ENCODE measurements at regions of chr2 and their contacts with region 1.

Region 1: DNA sequence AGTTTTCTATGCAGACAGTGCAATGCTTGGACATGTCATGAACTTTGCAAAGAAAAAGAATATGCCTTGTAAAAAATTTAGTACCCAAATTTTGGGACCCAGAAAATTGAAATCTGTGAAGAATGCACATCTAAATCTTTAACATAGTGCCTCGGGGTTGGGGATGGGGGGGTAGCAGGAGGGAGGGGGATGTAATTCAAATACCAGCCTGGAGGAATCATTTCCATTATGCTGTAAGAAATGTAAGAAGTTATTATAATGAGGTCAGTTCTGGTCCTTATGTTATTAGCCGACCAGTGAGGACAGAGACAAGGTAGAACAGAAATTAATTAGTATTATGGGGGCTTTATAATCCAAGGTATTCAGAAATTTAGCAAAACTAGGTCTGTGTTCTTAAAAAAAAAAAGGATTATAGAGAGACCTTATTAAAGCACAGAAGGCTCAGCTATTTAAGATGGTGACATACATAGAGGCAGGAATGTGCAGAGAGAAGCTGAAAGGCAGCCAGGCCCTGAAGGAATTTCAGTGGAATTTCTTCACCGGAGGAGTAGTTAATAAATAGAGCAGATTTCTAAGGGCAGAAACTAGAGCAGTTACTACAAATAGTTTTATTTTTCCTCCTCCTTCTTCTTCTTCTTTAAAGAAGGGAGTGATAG is 89.0 kb upstream of the RBMS1 start:
- DNase-seq: peak; percentile 75
- ATAC-seq: peak; percentile 81
- H3K4me3 ChIP-seq: no peak overlapping the region
- H3K27ac ChIP-seq: peak overlapping the region; percentile 70; the same call in 1 of the 2 replicates
- H3K4me1 ChIP-seq: peaks cover 18% of the 10 kb centered on the region
- H3K27me3 ChIP-seq: no peaks in the 10 kb centered on the region
- CTCF ChIP-seq: 0 out of 2 replicates have a peak, but pooled peaks have one; percentile 2
- POLR2A ChIP-seq: no peak
- RAD21 ChIP-seq: no peak

Region 2: GRCh38 chr2:160353813-160354212 is 228.8 kb before region 1 on chr2:
- CTCF ChIA-PET with region 1: no interaction called
- POLR2A ChIA-PET with region 1: interaction called, 11 read pairs
- dilution Hi-C with region 1: no loop called
- in situ Hi-C with region 1: no loop called
- intact Hi-C with region 1: no loop called
- DNase-seq: no peak
- ATAC-seq: no peak
- H3K4me3 ChIP-seq: no peak overlapping the region
- H3K27ac ChIP-seq: no peak overlapping the region
- H3K4me1 ChIP-seq: peaks cover 25% of the 10 kb centered on the region
- H3K27me3 ChIP-seq: no peaks in the 10 kb centered on the region
- CTCF ChIP-seq: no peak
- POLR2A ChIP-seq: no peak
- RAD21 ChIP-seq: no peak

Region 3: GRCh38 chr2:160429248-160430000 is 153.2 kb before region 1 on chr2:
- CTCF ChIA-PET with region 1: no interaction called
- POLR2A ChIA-PET with region 1: no interaction called
- dilution Hi-C with region 1: no loop called
- in situ Hi-C with region 1: no loop called
- intact Hi-C with region 1: loop called (anchors 5 kb)
- DNase-seq: peak; percentile 75
- ATAC-seq: no peak
- H3K4me3 ChIP-seq: no peak overlapping the region
- H3K27ac ChIP-seq: peak overlapping the region; percentile 56; the same call in 1 of the 2 replicates
- H3K4me1 ChIP-seq: peaks cover 16% of the 10 kb centered on the region
- H3K27me3 ChIP-seq: no peaks in the 10 kb centered on the region
- CTCF ChIP-seq: peak; percentile 56
- POLR2A ChIP-seq: no peak
- RAD21 ChIP-seq: peak; percentile 49

Region 4: DNA sequence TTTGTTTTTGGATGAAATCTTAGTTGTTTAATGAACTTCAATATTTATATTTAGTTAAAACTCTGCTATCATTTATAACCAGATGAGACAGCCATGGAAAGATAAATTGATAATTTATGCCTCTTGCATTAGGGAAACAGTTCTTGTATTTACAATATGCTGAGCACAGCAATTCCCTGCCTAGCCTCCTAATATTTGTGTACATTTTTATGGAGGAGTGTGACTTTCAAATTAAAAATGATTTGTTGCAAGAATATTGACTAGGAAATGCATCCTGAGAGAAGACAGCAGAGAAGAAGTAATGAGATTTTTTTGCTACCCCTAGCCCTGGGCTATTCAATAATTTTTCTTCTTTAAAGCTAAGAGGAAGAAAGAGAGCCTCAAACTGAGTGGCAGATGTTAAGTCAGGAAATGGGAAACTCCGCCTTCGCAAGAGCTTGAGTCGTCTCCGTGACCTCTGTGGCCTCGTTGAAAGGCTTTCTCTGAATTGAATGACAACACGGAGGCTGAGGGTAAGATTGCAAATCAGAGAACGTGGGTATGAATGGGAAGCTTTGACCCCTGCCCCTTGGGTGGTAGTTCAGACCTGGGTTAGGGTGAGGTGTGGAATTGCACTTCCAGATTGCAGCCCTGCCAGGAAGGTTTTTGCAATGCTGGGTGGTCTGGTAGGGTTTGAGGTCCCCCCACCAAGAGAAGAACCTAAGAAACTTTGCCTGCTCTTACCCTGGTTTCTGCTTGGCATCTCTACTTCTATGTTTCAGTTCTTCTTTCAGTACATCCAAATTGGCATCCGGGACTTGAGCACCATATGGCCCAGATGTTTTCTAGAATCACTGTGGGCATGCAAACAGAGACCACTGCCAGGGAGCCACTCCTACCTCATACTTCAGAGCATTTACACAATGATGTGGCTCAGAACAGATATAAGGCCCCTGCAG is 121.3 kb after region 1 on chr2:
- CTCF ChIA-PET with region 1: no interaction called
- POLR2A ChIA-PET with region 1: no interaction called
- dilution Hi-C with region 1: no loop called
- in situ Hi-C with region 1: no loop called
- intact Hi-C with region 1: no loop called
- DNase-seq: no peak
- ATAC-seq: no peak
- H3K4me3 ChIP-seq: no peak overlapping the region
- H3K27ac ChIP-seq: no peak overlapping the region
- H3K4me1 ChIP-seq: peaks cover 2% of the 10 kb centered on the region; the same call in 1 of the 2 replicates
- H3K27me3 ChIP-seq: no peaks in the 10 kb centered on the region
- CTCF ChIP-seq: no peak
- POLR2A ChIP-seq: no peak
- RAD21 ChIP-seq: no peak

Region 5: GRCh38 chr2:160859085-160859484 is 276.5 kb after region 1 on chr2:
- CTCF ChIA-PET with region 1: no interaction called
- POLR2A ChIA-PET with region 1: no interaction called
- dilution Hi-C with region 1: no loop called
- in situ Hi-C with region 1: no loop called
- intact Hi-C with region 1: no loop called
- DNase-seq: no peak
- ATAC-seq: no peak
- H3K4me3 ChIP-seq: no peak overlapping the region
- H3K27ac ChIP-seq: no peak overlapping the region
- H3K4me1 ChIP-seq: no peaks in the 10 kb centered on the region
- H3K27me3 ChIP-seq: no peaks in the 10 kb centered on the region
- CTCF ChIP-seq: no peak
- POLR2A ChIP-seq: no peak
- RAD21 ChIP-seq: no peak

Measured in IMR-90 (cell line).